Activated CD4-positive, alpha-beta T cell treated with anti-CD3 and anti-CD28 coated beads for 36 hours (primary cell): ENCODE measurements at regions of chr6 and their contacts with region 1.

Region 1: GRCh38 chr6:41779793-41780545 is at the start of gene FRS3:
- DNase-seq: peak; percentile 100
- ATAC-seq: peak; percentile 98
- H3K4me3 Mint-ChIP-seq: peak within 1 kb of the TSS; percentile 85
- H3K27ac Mint-ChIP-seq: peak within 1 kb of the TSS; percentile 75
- H3K4me1 Mint-ChIP-seq: peaks cover 18% of the 10 kb centered on the region
- H3K27me3 Mint-ChIP-seq: peaks cover 7% of the 10 kb centered on the region
- total RNA-seq, gene FRS3: 4.8 to 5.6 TPM

Region 2: GRCh38 chr6:41705996-41706835 is 73.8 kb before region 1 on chr6:
- CTCF ChIA-PET with region 1: interaction called, 3 read pairs
- POLR2A ChIA-PET with region 1: no interaction called
- intact Hi-C with region 1: loop called (anchors 1 to 10 kb)
- DNase-seq: peak; percentile 90
- ATAC-seq: peak; percentile 93
- H3K4me3 Mint-ChIP-seq: peak overlapping the region; percentile 34
- H3K27ac Mint-ChIP-seq: peak overlapping the region; percentile 85
- H3K4me1 Mint-ChIP-seq: peaks cover 33% of the 10 kb centered on the region
- H3K27me3 Mint-ChIP-seq: no peaks in the 10 kb centered on the region

Region 3: GRCh38 chr6:41936073-41936837 is 156.3 kb after region 1 on chr6:
- CTCF ChIA-PET with region 1: interaction called, 5 read pairs
- POLR2A ChIA-PET with region 1: no interaction called
- intact Hi-C with region 1: loop called in 1 of 2 experiments (anchors 5 kb)
- DNase-seq: peak; percentile 83
- ATAC-seq: peak; percentile 54
- H3K4me3 Mint-ChIP-seq: peak overlapping the region; percentile 100
- H3K27ac Mint-ChIP-seq: peak overlapping the region; percentile 96
- H3K4me1 Mint-ChIP-seq: peaks cover 55% of the 10 kb centered on the region
- H3K27me3 Mint-ChIP-seq: no peaks in the 10 kb centered on the region

Region 4: GRCh38 chr6:42104095-42104806 is 324.3 kb after region 1 on chr6:
- CTCF ChIA-PET with region 1: interaction called, 3 read pairs
- POLR2A ChIA-PET with region 1: no interaction called
- intact Hi-C with region 1: loop called in 1 of 2 experiments (anchors 1 kb)
- DNase-seq: peak; percentile 88
- ATAC-seq: peak; percentile 66
- H3K4me3 Mint-ChIP-seq: peak overlapping the region; percentile 61
- H3K27ac Mint-ChIP-seq: peak overlapping the region; percentile 64
- H3K4me1 Mint-ChIP-seq: peaks cover 27% of the 10 kb centered on the region
- H3K27me3 Mint-ChIP-seq: peaks cover 2% of the 10 kb centered on the region

Region 5: GRCh38 chr6:42260972-42261371 is 481.0 kb after region 1 on chr6:
- CTCF ChIA-PET with region 1: no interaction called
- POLR2A ChIA-PET with region 1: no interaction called
- intact Hi-C with region 1: no loop called
- DNase-seq: peak; percentile 65
- ATAC-seq: peak; percentile 74
- H3K4me3 Mint-ChIP-seq: no peak overlapping the region
- H3K27ac Mint-ChIP-seq: peak overlapping the region; percentile 40
- H3K4me1 Mint-ChIP-seq: no peaks in the 10 kb centered on the region
- H3K27me3 Mint-ChIP-seq: no peaks in the 10 kb centered on the region